A673 (cell line): ENCODE measurements at regions of chr2 and their contacts with region 1.

Region 1: GRCh38 chr2:123518367-123518766 is 506.7 kb upstream of the CNTNAP5 start:
- DNase-seq: peak; percentile 33
- H3K4me3 ChIP-seq: no peak overlapping the region
- H3K27ac ChIP-seq: no peak overlapping the region
- H3K4me1 ChIP-seq: peaks cover 6% of the 10 kb centered on the region
- H3K27me3 ChIP-seq: no peaks in the 10 kb centered on the region
- CTCF ChIP-seq: no peak

Region 2: DNA sequence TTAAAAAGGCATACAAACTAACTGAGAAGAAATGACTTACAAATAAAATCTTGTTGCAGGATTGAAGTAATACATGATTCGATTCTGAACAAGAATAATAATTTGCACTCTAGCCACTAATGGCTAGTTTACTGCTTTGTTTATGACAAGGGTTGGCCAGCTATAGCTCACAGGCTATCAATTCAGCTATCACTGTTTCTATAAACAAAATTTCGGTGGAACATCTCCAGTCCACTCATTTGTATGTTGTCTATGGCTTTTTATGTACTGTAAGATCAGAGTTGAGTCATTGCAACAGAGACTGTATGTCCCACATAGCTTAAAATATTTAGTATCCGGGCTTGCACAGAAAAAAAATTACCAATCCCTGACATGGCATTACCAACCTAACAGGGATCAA is 37.0 kb before region 1 on chr2:
- CTCF ChIA-PET with region 1: no interaction called
- POLR2A ChIA-PET with region 1: no interaction called
- intact Hi-C with region 1: no loop called
- DNase-seq: no peak
- H3K4me3 ChIP-seq: no peak overlapping the region
- H3K27ac ChIP-seq: no peak overlapping the region
- H3K4me1 ChIP-seq: no peaks in the 10 kb centered on the region
- H3K27me3 ChIP-seq: no peaks in the 10 kb centered on the region
- CTCF ChIP-seq: no peak

Region 3: DNA sequence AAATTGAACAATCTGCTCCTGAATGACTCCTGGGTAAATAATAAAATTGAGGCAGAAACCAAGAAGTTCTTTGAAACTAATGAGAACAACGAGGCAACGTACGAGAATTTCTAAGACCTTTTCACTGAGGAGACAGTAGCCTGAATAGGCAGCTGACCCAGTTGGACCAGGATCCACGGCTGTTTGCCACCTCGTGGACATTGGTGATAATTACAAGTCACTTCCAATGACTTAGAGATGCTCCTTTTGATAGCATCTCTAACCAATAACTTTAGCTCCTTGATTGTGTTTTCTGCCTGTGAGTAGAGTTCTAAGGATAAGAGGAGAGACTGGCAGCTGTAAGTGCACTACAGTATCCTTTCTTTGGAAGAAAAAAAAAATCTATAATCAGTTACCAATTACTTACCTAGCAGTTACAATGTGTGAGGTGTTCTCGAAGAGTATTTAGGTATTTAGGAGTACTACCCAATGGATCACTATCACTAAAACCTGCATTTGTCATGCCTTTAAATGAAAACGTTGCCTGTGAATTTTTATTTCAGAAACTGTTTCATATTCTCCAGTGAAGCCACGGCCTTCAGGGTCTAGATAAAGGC is 475.5 kb after region 1 on chr2:
- CTCF ChIA-PET with region 1: no interaction called
- POLR2A ChIA-PET with region 1: no interaction called
- intact Hi-C with region 1: loop called (anchors 5 kb)
- DNase-seq: peak; percentile 62
- H3K4me3 ChIP-seq: no peak overlapping the region
- H3K27ac ChIP-seq: no peak overlapping the region
- H3K4me1 ChIP-seq: no peaks in the 10 kb centered on the region
- H3K27me3 ChIP-seq: no peaks in the 10 kb centered on the region
- CTCF ChIP-seq: peak; percentile 64